ENCODE measurements at regions of chr15 and their contacts with region 1.

Region 1: GRCh38 chr15:76829939-76830338 is 75.2 kb downstream of the SCAPER start:
- DNase-seq: peak; percentile 27
- H3K4me3 ChIP-seq: no peak overlapping the region
- H3K27ac ChIP-seq: no peak overlapping the region
- H3K4me1 ChIP-seq: peaks cover 8% of the 10 kb centered on the region
- H3K27me3 ChIP-seq: no peaks in the 10 kb centered on the region
- CTCF ChIP-seq: no peak

Region 2: DNA sequence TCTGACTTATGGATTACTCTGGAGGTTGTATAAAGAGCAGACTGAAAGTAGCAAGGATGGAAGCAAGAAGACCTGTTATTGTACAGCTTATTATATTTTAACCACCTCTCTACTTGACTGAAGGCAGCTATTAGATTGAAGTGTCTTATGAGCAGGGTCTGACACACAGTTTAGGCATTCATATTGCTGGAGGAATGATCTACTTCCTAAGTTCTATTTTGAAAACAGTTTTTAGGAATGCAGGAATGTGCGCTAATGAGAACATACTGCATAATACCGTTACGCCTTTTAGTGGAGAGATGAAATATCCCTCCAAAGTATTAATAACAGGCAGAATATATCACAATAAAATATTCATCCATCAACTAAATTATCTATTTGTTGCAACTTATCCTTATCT is 300.0 kb before region 1 on chr15:
- CTCF ChIA-PET with region 1: no interaction called
- dilution Hi-C with region 1: no loop called
- in situ Hi-C with region 1: no loop called
- intact Hi-C with region 1: no loop called
- DNase-seq: no peak
- H3K4me3 ChIP-seq: no peak overlapping the region
- H3K27ac ChIP-seq: no peak overlapping the region
- H3K4me1 ChIP-seq: no peaks in the 10 kb centered on the region
- H3K27me3 ChIP-seq: no peaks in the 10 kb centered on the region
- CTCF ChIP-seq: no peak

Region 3: GRCh38 chr15:76772776-76773175 is 57.2 kb before region 1 on chr15:
- CTCF ChIA-PET with region 1: no interaction called
- dilution Hi-C with region 1: no loop called
- in situ Hi-C with region 1: no loop called
- intact Hi-C with region 1: loop called (anchors 5 kb)
- DNase-seq: no peak
- H3K4me3 ChIP-seq: no peak overlapping the region
- H3K27ac ChIP-seq: no peak overlapping the region
- H3K4me1 ChIP-seq: no peaks in the 10 kb centered on the region
- H3K27me3 ChIP-seq: no peaks in the 10 kb centered on the region
- CTCF ChIP-seq: no peak

Region 4: DNA sequence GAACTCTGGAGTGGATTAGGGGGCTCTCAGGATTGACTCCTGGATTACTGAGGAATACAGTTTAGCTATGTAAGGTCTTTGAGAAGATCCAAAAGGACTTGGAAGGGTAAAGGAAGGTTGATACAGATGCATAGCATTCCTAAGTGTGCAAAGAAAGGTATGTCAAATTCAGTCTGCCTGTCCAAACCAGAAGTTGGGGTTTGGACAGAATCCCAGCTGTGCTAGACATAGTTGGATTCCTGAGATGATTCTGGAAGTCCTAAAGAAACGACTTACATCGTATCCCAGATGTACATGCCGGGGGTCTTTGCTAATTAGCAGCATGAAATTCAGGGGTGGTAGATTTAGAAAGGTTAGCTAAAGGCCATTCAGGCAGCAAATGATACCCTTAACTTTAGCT is 338.7 kb after region 1 on chr15:
- CTCF ChIA-PET with region 1: no interaction called
- dilution Hi-C with region 1: no loop called
- in situ Hi-C with region 1: no loop called
- intact Hi-C with region 1: no loop called
- DNase-seq: peak; percentile 7
- H3K4me3 ChIP-seq: no peak overlapping the region
- H3K27ac ChIP-seq: no peak overlapping the region
- H3K4me1 ChIP-seq: no peaks in the 10 kb centered on the region
- H3K27me3 ChIP-seq: no peaks in the 10 kb centered on the region
- CTCF ChIP-seq: no peak

Measured in mammary epithelial cell (primary cell).